ENCODE measurements at regions of chr1 and their contacts with region 1.

Region 1: GRCh38 chr1:154955718-154956543 is at the start of gene PBXIP1:
- DNase-seq: peak in 8 of 10 donors; percentile 52 to 82 (median 70)
- H3K4me3 ChIP-seq: peak within 1 kb of the TSS; percentile 37 to 88 (median 69)
- H3K27ac ChIP-seq: peak within 1 kb of the TSS; percentile 18 to 95 (median 84)
- H3K27me3 ChIP-seq: no peaks in the 10 kb centered on the region
- CTCF ChIP-seq: peak in 44 of 56 donors; percentile 4 to 50 (median 30)
- total RNA-seq, gene PBXIP1: 40.2 to 244 (median 96.9) TPM

Region 2: DNA sequence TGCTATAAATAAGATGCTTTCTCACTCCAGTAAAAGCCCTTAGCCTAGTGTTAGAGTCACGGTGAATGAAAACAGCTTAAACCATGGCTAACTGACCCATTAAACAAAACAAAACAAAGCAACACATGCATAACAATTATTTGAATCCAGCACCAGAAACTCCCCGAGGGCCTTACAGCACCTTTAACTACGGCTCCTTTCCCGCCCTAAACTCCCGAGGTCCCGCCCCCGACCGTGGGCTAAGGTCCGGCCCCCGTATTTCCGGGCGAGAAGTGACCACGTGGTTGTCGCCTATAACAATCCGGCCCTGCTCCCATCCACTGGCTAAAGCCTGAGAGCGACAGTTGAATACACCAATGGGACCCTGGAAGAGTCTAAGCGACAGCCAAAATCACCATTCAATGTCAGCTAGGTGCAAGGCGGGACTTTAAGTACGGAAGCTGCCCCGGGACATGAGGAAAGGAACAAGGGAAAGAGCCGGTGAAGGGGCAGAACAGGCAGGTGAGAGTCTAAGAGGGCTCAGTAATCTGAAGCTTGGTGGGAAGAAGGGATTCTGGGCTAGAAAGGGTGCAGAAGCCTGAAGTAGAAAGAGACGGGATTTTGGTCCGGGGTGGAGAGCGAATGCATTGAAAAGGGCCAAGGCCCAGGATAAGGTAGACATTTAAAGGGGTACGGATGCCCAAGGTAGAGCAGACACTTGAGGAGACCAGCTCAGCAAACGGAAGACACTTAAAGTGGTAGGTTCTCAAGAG is 27.1 kb after region 1 on chr1 and contains the start of gene FLAD1:
- intact Hi-C with region 1: loop called in 1 of 2 experiments (anchors 1 kb)
- DNase-seq: peak; percentile 89 to 99 (median 96)
- H3K4me3 ChIP-seq: peak within 1 kb of the TSS; percentile 61 to 99 (median 84)
- H3K27ac ChIP-seq: peak within 1 kb of the TSS in 51 of 59 donors; percentile 8 to 92 (median 78)
- H3K27me3 ChIP-seq: no peaks in the 10 kb centered on the region
- CTCF ChIP-seq: peak in 25 of 56 donors; percentile 4 to 50 (median 24)
- total RNA-seq, gene FLAD1: 16.1 to 42.6 (median 25.5) TPM

Measured in dorsolateral prefrontal cortex (tissue), 120 donors.